ENCODE measurements at regions of chr1 and their contacts with region 1.

Region 1: DNA sequence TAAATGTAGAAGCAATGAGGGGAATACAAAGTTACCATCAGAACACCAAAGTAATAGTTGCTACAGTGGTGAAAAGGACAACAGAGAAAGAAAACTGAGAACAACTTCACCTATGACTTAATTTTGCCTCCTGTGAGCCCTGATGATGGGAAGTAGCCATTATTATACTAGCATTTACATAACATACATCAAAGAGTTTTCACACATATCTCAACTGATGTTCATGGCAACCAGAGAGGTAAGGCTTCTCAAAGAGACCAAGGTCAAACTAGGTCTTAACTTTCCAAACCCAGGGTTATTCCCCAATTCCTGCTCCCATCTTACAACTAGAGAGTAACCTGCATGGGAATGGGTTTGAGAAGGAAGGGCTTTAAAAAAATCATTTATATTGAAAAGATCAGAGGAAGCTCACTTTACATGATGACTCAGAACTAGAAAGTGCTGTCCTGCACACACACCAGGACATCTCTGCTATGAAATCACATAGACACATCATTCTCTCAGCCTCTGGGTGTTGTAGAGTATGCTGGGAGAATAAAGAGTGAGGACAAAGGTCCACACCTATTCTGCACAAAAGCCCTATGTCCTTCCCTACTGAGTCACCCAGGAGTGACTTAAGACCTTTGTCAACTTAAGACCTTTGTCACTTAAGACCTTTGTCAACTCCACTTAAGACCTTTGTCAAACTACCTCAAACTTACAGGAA is 179.7 kb downstream of the TNFSF18 start:
- DNase-seq: no peak
- H3K4me3 Mint-ChIP-seq: no peak overlapping the region
- H3K27ac Mint-ChIP-seq: no peak overlapping the region
- H3K4me1 Mint-ChIP-seq: peaks cover 32% of the 10 kb centered on the region
- H3K27me3 Mint-ChIP-seq: peaks cover 24% of the 10 kb centered on the region

Region 2: GRCh38 chr1:172671591-172671990 is 199.5 kb before region 1 on chr1:
- CTCF ChIA-PET with region 1: no interaction called
- intact Hi-C with region 1: loop called (anchors 2 kb)
- DNase-seq: no peak
- H3K4me3 Mint-ChIP-seq: no peak overlapping the region
- H3K27ac Mint-ChIP-seq: no peak overlapping the region
- H3K4me1 Mint-ChIP-seq: peaks cover 70% of the 10 kb centered on the region
- H3K27me3 Mint-ChIP-seq: no peaks in the 10 kb centered on the region

Region 3: DNA sequence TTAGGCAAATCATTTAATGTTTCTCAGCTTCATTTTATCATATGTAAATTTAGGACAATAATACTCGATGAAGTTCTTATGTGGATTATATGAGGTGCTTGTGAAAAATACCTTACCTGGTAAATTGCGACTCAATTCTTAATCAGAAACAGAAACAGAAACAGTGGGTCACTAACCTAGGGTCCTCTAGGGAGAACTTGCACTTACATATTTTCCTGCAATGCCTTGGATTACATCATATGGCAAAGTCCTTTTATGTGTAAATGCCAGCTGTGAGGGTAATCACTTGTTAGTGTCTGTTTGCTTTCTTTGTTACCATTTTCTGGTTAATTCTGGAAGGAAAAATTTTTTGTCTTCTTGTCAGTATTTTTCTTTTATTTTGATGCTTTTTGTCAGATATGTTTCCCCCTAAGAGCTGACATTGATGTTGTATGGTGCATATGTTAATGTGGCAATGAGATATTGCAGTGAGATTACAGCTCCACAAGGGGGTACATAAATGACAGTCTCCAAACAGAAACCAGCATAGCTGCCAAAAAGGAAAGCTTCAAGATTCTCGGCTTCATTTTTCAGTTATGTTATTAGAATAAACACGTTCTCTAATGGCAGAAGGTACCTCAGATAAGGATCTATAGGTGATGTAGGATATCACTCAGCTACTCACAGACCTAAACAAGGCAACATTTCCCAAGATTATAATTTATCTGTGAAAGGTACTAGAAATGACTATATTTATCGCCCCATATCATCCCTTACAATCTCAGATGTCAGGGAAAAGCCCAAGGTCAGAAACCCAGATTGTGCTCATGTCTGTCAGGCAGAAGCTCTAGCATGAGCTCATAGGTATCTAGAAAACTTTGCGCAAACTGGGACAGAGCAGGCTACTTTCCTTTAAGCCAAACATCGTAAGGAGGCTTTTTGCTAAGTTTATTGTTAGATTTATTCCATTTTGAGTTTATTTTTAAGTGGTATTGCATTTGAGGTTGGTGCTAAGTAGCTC is 92.3 kb before region 1 on chr1:
- CTCF ChIA-PET with region 1: interaction called, 7 read pairs
- intact Hi-C with region 1: loop called (anchors 1 kb)
- DNase-seq: no peak
- H3K4me3 Mint-ChIP-seq: no peak overlapping the region
- H3K27ac Mint-ChIP-seq: no peak overlapping the region
- H3K4me1 Mint-ChIP-seq: peaks cover 16% of the 10 kb centered on the region
- H3K27me3 Mint-ChIP-seq: no peaks in the 10 kb centered on the region

Region 4: DNA sequence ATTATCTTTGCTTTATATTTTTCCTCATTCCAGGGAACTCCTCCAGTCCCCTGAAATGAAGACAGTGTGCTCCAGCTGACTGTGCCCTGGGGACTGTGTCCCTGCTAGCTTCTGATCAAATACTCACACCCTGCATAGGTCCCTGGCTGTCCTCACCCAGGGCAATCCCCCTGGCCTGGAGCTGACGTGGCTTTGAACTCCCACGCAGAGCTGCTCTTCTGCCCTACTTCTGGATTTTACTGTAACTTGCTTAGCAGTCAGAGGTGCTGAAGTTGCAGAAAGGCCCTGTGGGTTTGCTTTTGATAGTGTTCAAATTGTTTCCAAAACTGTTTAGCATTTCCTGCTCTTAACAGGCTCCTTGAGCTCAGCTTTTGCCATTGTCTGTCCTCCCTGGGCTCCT is 25.7 kb before region 1 on chr1:
- CTCF ChIA-PET with region 1: no interaction called
- intact Hi-C with region 1: loop called (anchors 1 kb)
- DNase-seq: peak; percentile 89
- H3K4me3 Mint-ChIP-seq: no peak overlapping the region
- H3K27ac Mint-ChIP-seq: peak overlapping the region; percentile 7
- H3K4me1 Mint-ChIP-seq: peaks cover 16% of the 10 kb centered on the region
- H3K27me3 Mint-ChIP-seq: peaks cover 28% of the 10 kb centered on the region

Region 5: DNA sequence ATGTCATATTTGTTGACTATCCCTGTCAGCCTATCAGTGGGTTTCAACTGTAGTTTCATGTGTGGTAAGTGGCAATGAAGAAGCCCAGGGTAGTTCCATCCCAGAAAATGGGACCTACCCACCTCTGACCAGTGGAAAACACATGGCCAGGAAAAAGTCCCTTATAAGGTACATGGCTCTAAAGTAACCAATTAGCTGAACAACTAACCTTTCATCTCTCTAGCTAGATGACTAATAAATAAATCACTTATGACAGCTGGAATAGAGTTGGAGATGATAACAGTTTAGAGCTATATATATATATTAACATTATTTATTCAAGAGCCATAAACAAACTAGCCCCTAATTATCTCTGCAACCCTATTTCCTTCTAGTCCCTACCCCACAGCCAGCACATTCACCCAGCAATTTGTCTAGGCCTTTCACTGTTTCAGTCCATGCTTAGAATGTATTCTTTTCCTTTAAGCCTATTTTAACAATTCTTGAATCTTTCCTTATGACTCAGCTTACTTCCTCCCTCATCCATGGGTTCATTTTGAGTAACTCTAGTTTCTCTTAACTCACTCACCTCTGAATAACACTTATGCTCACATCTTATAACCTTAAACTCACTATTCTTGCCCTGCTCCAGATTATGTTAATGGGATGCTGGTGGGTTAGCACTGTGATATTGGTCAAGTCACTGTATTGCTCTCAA is 95.9 kb after region 1 on chr1:
- CTCF ChIA-PET with region 1: no interaction called
- intact Hi-C with region 1: loop called (anchors 1 kb)
- DNase-seq: no peak
- H3K4me3 Mint-ChIP-seq: no peak overlapping the region
- H3K27ac Mint-ChIP-seq: no peak overlapping the region
- H3K4me1 Mint-ChIP-seq: peaks cover 18% of the 10 kb centered on the region
- H3K27me3 Mint-ChIP-seq: peaks cover 2% of the 10 kb centered on the region

Region 6: GRCh38 chr1:173330149-173330951 is 459.3 kb after region 1 on chr1:
- CTCF ChIA-PET with region 1: no interaction called
- intact Hi-C with region 1: loop called (anchors 1 kb)
- DNase-seq: no peak
- H3K4me3 Mint-ChIP-seq: no peak overlapping the region
- H3K27ac Mint-ChIP-seq: no peak overlapping the region
- H3K4me1 Mint-ChIP-seq: peaks cover 25% of the 10 kb centered on the region
- H3K27me3 Mint-ChIP-seq: no peaks in the 10 kb centered on the region